ENCODE measurements at regions of chr4 and their contacts with region 1.

Region 1: GRCh38 chr4:74038161-74039064 is at the start of gene CXCL3:
- DNase-seq: peak; percentile 90 to 93 (median 92)
- ATAC-seq: peak; percentile 91
- H3K4me3 ChIP-seq: peak within 1 kb of the TSS; percentile 44
- H3K4me1 ChIP-seq: no peaks in the 10 kb centered on the region
- CTCF ChIP-seq: no peak
- total RNA-seq, gene CXCL3: 2.7 to 30.8 (median 3.9) TPM

Region 2: DNA sequence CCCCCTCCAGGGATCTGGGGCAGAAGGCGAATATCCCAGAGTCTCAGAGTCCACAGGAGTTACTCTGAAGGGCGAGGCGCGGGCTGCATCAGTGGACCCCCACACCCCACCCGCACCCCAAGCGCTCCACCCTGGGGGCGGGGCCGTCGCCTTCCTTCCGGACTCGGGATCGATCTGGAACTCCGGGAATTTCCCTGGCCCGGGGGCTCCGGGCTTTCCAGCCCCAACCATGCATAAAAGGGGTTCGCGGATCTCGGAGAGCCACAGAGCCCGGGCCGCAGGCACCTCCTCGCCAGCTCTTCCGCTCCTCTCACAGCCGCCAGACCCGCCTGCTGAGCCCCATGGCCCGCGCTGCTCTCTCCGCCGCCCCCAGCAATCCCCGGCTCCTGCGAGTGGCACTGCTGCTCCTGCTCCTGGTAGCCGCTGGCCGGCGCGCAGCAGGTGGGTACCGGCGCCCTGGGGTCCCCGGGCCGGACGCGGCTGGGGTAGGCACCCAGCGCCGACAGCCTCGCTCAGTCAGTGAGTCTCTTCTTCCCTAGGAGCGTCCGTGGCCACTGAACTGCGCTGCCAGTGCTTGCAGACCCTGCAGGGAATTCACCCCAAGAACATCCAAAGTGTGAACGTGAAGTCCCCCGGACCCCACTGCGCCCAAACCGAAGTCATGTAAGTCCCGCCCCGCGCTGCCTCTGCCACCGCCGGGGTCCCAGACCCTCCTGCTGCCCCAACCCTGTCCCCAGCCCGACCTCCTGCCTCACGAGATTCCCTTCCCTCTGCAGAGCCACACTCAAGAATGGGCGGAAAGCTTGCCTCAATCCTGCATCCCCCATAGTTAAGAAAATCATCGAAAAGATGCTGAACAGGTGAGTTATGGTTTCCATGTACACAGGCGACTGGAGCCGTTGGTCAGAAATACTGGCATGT is 169.0 kb before region 1 on chr4 and contains the start of gene CXCL1:
- intact Hi-C with region 1: loop called in 1 of 2 experiments (anchors 10 kb)
- DNase-seq: peak; percentile 76 to 82 (median 82)
- ATAC-seq: peak; percentile 73
- H3K4me3 ChIP-seq: peak within 1 kb of the TSS; percentile 56
- H3K4me1 ChIP-seq: no peaks in the 10 kb centered on the region
- CTCF ChIP-seq: no peak
- total RNA-seq, gene CXCL1: 3.0 to 21.7 (median 3.2) TPM

Region 3: DNA sequence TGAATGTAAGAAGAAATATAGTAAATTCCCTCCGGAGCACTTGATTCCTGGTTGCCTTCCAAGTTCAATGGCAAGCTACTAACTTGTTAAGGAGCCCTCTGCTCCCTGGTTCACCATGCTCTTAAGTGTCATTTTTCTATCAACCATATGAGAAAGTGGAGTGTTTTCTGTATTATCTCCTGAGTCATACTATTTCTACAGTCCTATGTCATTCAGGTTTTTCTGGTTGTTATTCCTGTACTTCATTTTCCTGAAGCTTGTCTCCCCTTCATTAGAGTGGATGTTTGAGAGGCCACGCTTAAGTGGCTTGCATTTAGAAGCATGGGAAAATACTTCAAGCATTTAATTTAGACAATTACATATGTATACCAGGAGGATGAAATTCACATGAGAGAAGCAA is 255.1 kb after region 1 on chr4:
- intact Hi-C with region 1: no loop called
- DNase-seq: no peak
- ATAC-seq: no peak
- H3K4me3 ChIP-seq: no peak overlapping the region
- H3K4me1 ChIP-seq: no peaks in the 10 kb centered on the region
- CTCF ChIP-seq: no peak

Measured in mucosa of descending colon (tissue), 3 donors.